AG04450 (cell line): ENCODE measurements at regions of chr16 and their contacts with region 1.

Region 1: GRCh38 chr16:15618392-15618791 is 24.6 kb downstream of the MARF1 start:
- DNase-seq: peak; percentile 26
- H3K4me3 ChIP-seq: no peak overlapping the region
- H3K27ac ChIP-seq: peak overlapping the region; percentile 57
- H3K27me3 ChIP-seq: no peaks in the 10 kb centered on the region
- CTCF ChIP-seq: no peak

Region 2: DNA sequence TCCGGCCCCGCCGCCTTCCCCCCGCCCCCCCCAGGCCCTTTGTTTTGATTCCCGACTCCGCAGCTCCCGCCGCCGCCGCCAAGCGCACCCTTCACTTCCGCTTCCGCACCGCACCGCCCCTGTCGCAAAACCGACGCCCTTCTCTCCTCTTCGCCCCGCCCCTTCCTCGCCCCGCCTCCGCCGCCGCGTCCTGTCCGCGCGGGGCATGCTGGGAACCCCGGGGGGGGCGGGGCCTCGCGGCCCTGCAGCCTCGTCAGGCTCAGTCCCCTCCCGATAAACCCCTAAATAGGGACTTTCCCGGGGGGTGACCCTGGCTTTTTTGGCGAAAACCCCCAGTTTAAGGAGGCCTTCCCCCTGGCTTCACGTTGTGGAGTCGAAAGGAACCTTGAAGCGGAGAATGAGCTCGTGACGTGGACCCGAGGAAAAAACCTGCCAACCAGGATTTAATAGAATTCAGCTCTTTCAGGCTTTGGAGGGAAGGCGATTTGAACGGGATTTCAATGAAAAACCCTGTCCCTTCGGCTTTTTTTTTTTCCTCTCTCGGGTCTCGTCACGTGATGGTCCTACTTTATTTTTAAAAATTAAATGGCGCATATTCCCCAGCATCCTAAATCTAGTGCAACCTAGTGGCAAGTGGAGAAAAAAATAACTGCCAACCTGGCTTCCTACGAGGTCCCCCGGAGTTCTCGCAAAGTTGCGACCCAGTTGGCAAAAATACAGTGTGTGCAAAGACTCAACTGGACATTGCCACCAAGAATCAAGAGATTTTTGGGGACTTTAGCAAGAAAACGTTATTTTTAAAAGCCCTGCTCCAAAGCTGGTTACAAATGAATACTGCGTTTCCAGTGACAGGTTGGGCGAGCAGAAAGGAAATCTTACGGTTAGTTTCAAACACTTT is 24.9 kb after region 1 on chr16 and contains the start of gene MARF1:
- CTCF ChIA-PET with region 1: interaction called, 10 read pairs
- POLR2A ChIA-PET with region 1: no interaction called
- DNase-seq: peak; percentile 72
- H3K4me3 ChIP-seq: peak within 1 kb of the TSS; percentile 96
- H3K27ac ChIP-seq: peak within 1 kb of the TSS; percentile 98
- H3K27me3 ChIP-seq: no peaks in the 10 kb centered on the region
- CTCF ChIP-seq: peak; percentile 55
- polyA plus RNA-seq, gene MARF1: 31.6 and 37.4 TPM in 2 replicates

Region 3: GRCh38 chr16:15807603-15808009 is 189.2 kb after region 1 on chr16:
- CTCF ChIA-PET with region 1: no interaction called
- POLR2A ChIA-PET with region 1: no interaction called
- DNase-seq: peak; percentile 15
- H3K4me3 ChIP-seq: no peak overlapping the region
- H3K27ac ChIP-seq: no peak overlapping the region
- H3K27me3 ChIP-seq: peaks cover 13% of the 10 kb centered on the region
- CTCF ChIP-seq: no peak